Panc1 (cell line): ENCODE measurements at regions of chr14 and their contacts with region 1.

Region 1: DNA sequence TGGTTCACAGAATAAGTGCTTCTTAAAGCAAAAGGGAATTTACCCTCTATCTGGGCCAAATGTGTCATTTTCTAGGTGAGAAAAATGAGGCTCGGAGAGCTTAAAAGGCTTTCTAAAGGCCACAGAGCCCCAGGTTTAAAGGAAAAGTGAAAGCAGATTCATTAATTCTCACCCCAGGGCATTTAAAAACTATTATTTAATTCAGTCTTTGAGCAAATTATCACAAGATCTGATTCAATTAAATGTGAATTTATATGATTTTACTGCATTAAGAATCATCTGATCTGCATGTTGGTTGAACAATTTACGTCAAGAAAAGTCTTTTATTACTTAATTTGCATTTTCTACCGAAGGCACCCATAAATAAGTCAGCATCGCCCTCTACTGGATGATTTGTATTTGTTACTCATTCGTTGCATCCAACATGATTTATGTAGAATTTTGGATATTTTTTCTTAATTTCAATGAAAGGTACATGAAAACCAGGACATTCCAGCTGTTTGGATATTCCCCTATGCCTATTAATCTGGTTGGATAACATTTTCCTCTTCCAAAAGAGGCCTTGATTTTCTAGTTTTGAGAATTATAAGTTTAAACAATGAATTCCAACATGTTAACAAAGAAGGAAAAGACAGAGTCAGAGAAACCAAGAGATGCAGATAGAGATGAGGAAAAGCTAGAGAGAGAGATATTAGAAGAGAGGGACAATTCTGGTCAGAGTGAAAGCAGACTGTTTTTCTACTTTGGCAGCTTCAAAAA is 19.1 kb upstream of the DHRS7 start:
- DNase-seq: no peak
- ATAC-seq: no peak
- H3K4me3 ChIP-seq: peak overlapping the region; percentile 8 to 21; a peak in 2 of 4 replicates
- H3K27ac ChIP-seq: no peak overlapping the region
- H3K4me1 ChIP-seq: no peaks in the 10 kb centered on the region
- H3K27me3 ChIP-seq: no peaks in the 10 kb centered on the region
- CTCF ChIP-seq: peak; percentile 60; the same call in 1 of the 2 replicates

Region 2: DNA sequence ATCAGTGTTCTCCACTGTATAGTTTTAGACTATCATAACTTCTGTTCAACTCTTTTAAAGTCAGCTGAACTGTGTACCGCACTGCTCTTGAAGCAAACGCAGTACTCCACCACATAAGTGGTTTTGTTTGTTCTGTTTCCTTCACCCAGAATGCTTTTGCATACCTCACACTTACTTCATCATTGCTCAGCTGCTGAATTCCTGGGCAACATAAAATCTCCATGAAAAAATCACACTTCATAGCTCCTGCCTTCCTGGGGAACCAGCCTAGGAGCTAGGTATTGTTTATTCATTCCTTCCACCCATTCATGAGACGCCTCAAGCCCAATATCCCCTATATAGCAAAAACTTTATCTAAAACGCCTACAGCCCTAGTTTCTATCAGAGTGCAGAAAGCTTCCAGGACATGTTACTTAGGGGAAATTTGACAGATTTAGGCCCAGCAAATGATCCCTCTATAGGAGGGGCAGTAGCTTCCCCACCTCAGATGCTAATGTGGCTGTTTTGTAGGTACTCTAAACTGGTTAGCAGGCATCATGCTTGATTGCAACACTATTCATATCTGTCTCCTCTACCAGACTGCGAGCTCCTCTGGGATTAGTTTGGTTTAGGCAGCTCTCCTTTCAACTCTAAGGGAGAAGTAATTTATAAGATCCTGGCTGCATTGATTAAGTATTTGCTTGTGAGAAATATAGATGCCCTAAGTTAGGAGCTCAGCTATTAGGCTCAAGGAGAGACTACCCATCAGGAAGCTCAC is 219.9 kb before region 1 on chr14:
- CTCF ChIA-PET with region 1: no interaction called
- POLR2A ChIA-PET with region 1: no interaction called
- in situ Hi-C with region 1: no loop called
- intact Hi-C with region 1: loop called (anchors 1 kb)
- DNase-seq: no peak
- ATAC-seq: no peak
- H3K4me3 ChIP-seq: no peak overlapping the region
- H3K27ac ChIP-seq: no peak overlapping the region
- H3K4me1 ChIP-seq: no peaks in the 10 kb centered on the region
- H3K27me3 ChIP-seq: no peaks in the 10 kb centered on the region
- CTCF ChIP-seq: no peak

Region 3: GRCh38 chr14:60064491-60065072 is 119.7 kb before region 1 on chr14:
- CTCF ChIA-PET with region 1: interaction called, 3 read pairs
- POLR2A ChIA-PET with region 1: no interaction called
- in situ Hi-C with region 1: no loop called
- intact Hi-C with region 1: loop called (anchors 2 kb)
- DNase-seq: peak; percentile 15
- ATAC-seq: no peak
- H3K4me3 ChIP-seq: no peak overlapping the region
- H3K27ac ChIP-seq: no peak overlapping the region
- H3K4me1 ChIP-seq: no peaks in the 10 kb centered on the region
- H3K27me3 ChIP-seq: no peaks in the 10 kb centered on the region
- CTCF ChIP-seq: no peak

Region 4: DNA sequence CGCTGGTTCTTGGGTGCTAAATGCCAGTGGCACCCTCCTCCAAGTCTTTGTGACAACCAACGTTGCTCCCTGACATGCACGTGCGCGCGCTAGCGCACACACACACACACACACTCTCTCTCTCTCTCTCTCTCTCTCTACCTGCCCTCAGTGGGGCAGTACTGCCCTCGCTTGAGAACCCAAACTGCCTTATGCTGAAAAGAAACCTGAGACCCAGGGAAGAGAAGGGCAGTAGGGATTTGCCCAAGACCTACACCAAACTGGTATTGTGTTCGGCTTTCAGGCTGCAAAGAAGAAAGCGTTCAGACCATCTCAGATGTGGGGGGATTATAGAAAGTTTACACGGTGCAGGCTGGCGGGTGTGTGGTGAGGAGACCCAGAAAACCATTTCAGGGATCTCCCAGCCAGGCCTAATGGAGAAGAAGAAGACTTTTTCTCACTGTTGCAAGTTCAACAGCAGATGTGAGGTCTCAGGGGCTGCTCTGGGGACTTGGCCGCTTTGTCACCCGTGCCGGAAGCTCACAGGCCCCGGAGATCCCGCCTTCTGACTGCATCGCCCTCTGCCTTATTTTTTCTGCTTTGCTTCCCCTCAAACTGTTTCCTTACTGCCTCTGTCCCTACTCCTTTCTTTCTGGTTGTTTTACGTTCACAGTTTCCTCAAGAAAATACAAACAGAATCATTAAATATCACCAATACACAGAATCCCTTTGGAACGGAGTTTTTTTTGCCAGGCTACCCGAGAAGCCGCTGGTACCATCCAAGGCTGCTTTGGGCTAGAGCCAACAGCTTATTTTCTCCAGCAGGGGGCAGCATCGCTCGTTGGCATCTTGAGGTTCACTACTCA is 147.1 kb after region 1 on chr14:
- CTCF ChIA-PET with region 1: no interaction called
- POLR2A ChIA-PET with region 1: no interaction called
- in situ Hi-C with region 1: no loop called
- intact Hi-C with region 1: loop called (anchors 10 kb)
- DNase-seq: peak; percentile 43
- ATAC-seq: peak; percentile 85
- H3K4me3 ChIP-seq: peak overlapping the region; percentile 42 to 68
- H3K27ac ChIP-seq: 0 out of 2 replicates have a peak overlapping the region, but pooled peaks have one; percentile 39
- H3K4me1 ChIP-seq: no peaks in the 10 kb centered on the region
- H3K27me3 ChIP-seq: peaks cover 5% of the 10 kb centered on the region
- CTCF ChIP-seq: peak; percentile 86